ENCODE measurements at regions of chr9 and their contacts with region 1.

Region 1: DNA sequence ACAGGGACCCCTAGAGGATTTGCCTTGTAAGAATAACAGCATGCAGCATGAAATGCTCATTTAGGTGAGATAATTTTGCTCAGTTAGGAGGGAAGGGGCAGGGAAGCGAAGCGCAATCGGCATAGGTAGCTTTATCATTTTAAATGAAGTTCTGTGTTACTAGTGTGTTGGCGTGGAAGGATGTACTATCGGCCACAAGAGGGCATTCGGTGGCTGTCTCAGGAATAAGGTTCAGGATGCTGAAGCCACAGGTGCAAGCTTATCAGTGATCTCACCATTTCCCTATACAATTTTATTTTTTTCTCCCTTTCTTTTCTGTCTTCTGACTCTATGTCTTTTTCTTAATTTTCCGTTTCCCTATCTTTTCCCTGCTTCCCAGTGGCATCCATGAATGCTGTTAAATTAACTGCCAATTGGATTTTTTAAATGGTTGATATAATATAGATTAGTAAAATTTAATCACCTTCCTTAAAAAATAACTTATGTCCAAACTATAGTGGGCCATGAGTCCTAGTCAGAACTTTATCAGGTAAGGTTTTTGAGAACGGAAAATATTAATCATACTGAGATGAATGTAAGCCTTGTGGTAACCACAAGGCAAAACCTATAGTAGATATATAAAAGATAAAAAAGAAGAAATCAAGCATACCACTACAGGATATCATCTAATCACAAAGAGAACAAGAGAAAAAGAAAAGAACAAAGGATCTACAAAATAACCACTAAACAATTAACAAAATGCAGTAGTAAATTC is 1.2 kb upstream of the INSL6 start:
- DNase-seq: peak; percentile 1
- H3K4me3 ChIP-seq: no peak overlapping the region
- CTCF ChIP-seq: peak; percentile 70

Region 2: DNA sequence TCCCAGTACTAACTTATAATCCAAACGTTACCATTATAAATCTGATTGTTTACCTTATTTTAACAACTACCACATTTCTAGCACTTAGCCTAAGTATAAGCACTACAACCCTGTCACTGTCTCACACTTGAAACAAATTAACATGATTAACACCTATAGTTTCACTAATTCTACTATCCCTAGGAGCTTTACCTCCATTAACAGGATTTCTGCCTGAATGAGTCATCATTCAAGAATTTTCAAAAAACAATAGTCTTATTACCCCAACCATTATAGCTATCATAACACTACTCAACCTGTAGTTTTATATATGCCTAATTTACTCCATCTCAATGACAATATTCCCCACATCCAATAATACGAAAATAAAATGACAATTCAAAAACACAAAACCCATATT is 90.8 kb before region 1 on chr9:
- CTCF ChIA-PET with region 1: no interaction called
- POLR2A ChIA-PET with region 1: no interaction called
- DNase-seq: no peak
- H3K4me3 ChIP-seq: no peak overlapping the region
- CTCF ChIP-seq: no peak

Region 3: GRCh38 chr9:5205071-5205470 is 18.5 kb after region 1 on chr9:
- CTCF ChIA-PET with region 1: interaction called, 13 read pairs
- POLR2A ChIA-PET with region 1: no interaction called
- DNase-seq: no peak
- H3K4me3 ChIP-seq: no peak overlapping the region
- CTCF ChIP-seq: no peak

Region 4: GRCh38 chr9:5425006-5425628 is 238.5 kb after region 1 on chr9:
- CTCF ChIA-PET with region 1: interaction called, 20 read pairs
- POLR2A ChIA-PET with region 1: no interaction called
- DNase-seq: no peak
- H3K4me3 ChIP-seq: no peak overlapping the region
- CTCF ChIP-seq: peak; percentile 6

Region 5: GRCh38 chr9:5437254-5438216 is 250.9 kb after region 1 on chr9 and contains the start of gene PLGRKT:
- CTCF ChIA-PET with region 1: interaction called, 28 read pairs
- POLR2A ChIA-PET with region 1: no interaction called
- DNase-seq: no peak
- H3K4me3 ChIP-seq: peak within 1 kb of the TSS; percentile 78
- CTCF ChIP-seq: no peak

Region 6: DNA sequence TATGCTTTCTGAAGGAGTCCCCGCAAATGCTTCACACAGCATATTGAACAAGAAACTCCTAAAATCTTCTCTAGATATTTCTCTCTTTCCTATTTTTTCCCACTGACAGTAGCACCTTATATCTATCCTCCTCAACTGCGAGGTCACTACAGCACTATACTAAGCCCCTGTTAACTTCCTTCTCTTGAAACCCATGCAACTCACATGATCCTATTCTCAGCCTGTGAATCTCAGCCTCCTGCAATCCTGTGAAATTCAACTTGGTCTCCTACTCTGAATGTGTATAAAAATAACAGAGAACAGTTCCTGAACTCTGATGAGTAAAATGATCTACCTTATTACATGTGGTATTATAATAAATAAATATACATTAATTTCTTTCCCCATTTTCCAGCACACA is 257.3 kb after region 1 on chr9:
- CTCF ChIA-PET with region 1: interaction called, 35 read pairs
- POLR2A ChIA-PET with region 1: no interaction called
- DNase-seq: no peak
- H3K4me3 ChIP-seq: no peak overlapping the region
- CTCF ChIP-seq: no peak

Region 7: GRCh38 chr9:5593904-5594303 is 407.3 kb after region 1 on chr9:
- CTCF ChIA-PET with region 1: interaction called, 99 read pairs
- POLR2A ChIA-PET with region 1: no interaction called
- DNase-seq: no peak
- H3K4me3 ChIP-seq: no peak overlapping the region
- CTCF ChIP-seq: no peak

Measured in AG04449 (cell line).